CD14-positive monocyte (primary cell): ENCODE measurements at regions of chr16 and their contacts with region 1.

Region 1: GRCh38 chr16:21554795-21555585 is 44.4 kb upstream of the METTL9 start:
- DNase-seq: peak; percentile 84 to 92 (median 85)
- H3K4me3 ChIP-seq: peak overlapping the region in 1 of 3 experiments; percentile 48
- H3K4me3 Mint-ChIP-seq: peak overlapping the region; percentile 69 to 88
- H3K27ac ChIP-seq: no peak overlapping the region
- H3K27ac Mint-ChIP-seq: peak overlapping the region in 2 of 7 donors; percentile 19 to 69
- H3K4me1 ChIP-seq: peaks cover 7 to 10% of the 10 kb centered on the region in 2 donors
- H3K4me1 Mint-ChIP-seq: peaks cover 7% of the 10 kb centered on the region
- H3K27me3 ChIP-seq: no peaks in the 10 kb centered on the region
- H3K27me3 Mint-ChIP-seq: peaks cover 3 to 4% (median 3%) of the 10 kb centered on the region in 3 donors
- CTCF ChIP-seq: peak; percentile 100

Region 2: DNA sequence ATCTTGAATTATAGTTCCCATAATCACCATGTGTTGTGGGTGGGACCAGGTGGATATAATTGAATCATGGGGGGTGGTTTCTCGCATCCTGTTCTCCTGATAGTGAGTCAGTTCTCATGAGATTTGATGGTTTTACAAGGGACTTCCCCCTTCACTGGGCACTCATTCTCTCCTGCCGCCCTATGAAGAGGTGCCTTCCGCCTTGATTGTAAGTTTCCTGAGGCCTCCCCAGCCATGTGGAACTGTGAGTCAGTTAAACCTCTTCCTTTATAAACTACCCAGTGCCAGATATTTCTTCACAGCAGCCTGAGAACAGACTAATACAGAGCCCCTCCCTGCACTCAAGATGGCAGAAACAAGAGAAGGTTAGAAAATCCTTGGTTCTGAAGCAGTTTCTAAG is 370.2 kb before region 1 on chr16:
- intact Hi-C with region 1: loop called (anchors 5 to 10 kb)
- DNase-seq: peak in 1 of 3 donors; percentile 46
- H3K4me3 ChIP-seq: no peak overlapping the region
- H3K4me3 Mint-ChIP-seq: no peak overlapping the region
- H3K27ac ChIP-seq: no peak overlapping the region
- H3K27ac Mint-ChIP-seq: peak overlapping the region in 2 of 7 donors; percentile 70 to 84
- H3K4me1 ChIP-seq: peaks cover 4 to 5% of the 10 kb centered on the region in 2 donors
- H3K4me1 Mint-ChIP-seq: peaks cover 6% of the 10 kb centered on the region
- H3K27me3 ChIP-seq: peaks cover 0 to 2% of the 10 kb centered on the region in 2 donors
- H3K27me3 Mint-ChIP-seq: peaks cover 2 to 8% (median 5%) of the 10 kb centered on the region in 3 donors
- CTCF ChIP-seq: no peak

Region 3: DNA sequence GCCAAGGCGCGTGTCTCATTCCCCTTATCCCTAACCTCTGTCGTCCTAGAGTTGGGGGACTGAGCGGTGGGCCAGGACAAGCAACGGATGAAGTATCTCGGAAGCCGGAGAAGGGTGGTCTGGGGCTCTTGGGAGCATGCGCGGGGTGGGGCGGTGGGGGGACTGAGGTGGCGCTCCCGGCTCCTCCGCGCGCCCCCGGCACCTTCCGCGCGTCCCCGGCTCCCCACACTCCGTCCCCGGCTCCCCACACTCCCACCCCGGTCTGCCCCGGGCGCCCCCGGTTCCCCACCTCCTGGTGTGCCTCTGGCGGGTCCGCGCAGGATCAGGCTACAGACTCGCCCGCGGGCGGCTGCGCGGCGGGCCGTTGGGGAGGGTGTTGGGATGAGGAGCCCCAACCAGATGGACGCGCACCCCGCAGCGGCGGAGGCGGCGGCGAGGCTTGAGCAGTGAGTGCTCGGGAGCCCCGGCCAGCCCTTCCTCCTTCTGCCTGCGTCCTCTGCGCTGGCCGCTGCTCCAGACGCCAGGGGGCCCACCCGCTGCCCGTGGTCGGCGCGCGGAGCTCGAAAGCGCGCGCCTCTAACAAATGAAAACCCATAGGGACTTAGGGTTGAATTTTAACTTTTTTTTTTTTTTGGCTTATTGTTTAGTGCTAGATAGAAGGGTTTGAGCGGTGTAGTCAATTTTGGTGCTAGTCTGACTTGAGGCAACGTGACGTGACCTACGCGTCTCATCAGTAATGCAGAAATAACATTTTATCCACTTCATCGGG is 271.3 kb before region 1 on chr16:
- intact Hi-C with region 1: loop called in 1 of 2 experiments (anchors 10 kb)
- DNase-seq: peak; percentile 31 to 51 (median 46)
- H3K4me3 ChIP-seq: peak overlapping the region in 1 of 3 experiments; percentile 54
- H3K4me3 Mint-ChIP-seq: peak overlapping the region; percentile 66 to 87
- H3K27ac ChIP-seq: no peak overlapping the region
- H3K27ac Mint-ChIP-seq: no peak overlapping the region
- H3K4me1 ChIP-seq: peaks cover 6 to 8% of the 10 kb centered on the region in 2 donors
- H3K4me1 Mint-ChIP-seq: peaks cover 7% of the 10 kb centered on the region
- H3K27me3 ChIP-seq: peaks cover 54 to 76% of the 10 kb centered on the region in 2 donors
- H3K27me3 Mint-ChIP-seq: peaks cover 56 to 74% (median 71%) of the 10 kb centered on the region in 3 donors
- CTCF ChIP-seq: peak; percentile 46

Region 4: DNA sequence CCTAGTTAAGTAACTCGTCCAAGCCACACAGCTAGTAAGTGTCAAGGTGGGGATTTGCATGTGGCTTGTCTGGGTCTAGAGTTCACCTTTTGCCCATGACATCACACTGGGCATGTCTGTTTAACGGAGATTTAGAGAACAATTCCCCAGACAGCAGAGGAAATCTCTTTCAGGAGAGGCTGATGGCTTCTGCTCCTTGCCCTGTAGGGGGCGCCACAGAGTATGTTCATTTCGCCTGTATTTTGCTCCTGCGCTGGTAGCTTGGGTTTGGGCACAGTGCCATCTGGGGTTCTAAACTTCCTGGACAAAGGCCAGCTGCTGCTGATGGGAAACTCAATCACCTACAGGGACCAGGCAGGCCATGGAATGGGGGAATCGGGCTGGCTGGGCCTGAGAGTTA is 129.2 kb after region 1 on chr16:
- intact Hi-C with region 1: no loop called
- DNase-seq: peak in 2 of 3 donors; percentile 24 to 40
- H3K4me3 ChIP-seq: no peak overlapping the region
- H3K4me3 Mint-ChIP-seq: no peak overlapping the region
- H3K27ac ChIP-seq: no peak overlapping the region
- H3K27ac Mint-ChIP-seq: no peak overlapping the region
- H3K4me1 ChIP-seq: no peaks in the 10 kb centered on the region
- H3K4me1 Mint-ChIP-seq: peaks cover 4% of the 10 kb centered on the region
- H3K27me3 ChIP-seq: no peaks in the 10 kb centered on the region
- H3K27me3 Mint-ChIP-seq: peaks cover 3 to 15% (median 8%) of the 10 kb centered on the region in 3 donors
- CTCF ChIP-seq: peak; percentile 71

Region 5: DNA sequence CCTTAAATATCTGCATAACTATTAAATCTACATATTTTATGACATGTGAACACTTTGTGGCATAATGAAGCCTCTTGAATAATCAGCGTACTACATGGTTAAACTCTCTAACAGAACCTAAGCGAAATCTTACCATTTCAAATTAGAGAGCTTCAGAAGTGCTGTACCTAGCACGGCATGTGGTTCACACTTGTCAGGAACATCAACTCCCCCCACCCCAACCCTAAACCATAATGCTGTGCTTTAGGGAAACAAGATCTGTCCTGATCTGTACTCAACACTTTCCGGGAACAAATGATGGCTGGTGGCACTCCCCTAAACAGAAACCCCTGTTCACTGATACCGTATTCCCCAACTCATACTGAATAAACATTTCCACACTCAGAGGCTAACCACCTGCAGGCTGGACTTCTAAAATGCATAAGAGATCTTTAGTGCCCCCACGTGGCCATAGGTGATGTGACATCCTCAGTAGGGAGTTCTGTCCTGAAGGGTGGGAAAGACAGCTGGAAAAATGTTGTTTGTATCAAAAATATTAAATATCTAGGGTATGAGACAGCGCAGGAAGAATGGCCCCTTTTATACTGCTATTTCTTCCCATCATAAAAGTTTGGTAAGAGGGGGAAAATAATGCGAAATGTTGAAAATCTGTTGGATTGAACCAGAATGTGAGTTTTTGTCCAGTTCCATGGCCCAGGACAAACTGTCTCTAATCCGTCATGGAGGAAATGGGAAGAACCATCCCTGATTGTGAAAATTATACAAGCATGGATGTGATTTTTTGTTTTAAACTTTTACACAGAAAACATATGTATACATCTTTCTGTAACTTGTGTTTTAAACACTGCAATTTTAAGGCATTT is 1505.7 kb after region 1 on chr16:
- intact Hi-C with region 1: loop called in 1 of 2 experiments (anchors 10 kb)
- DNase-seq: peak; percentile 25 to 49 (median 47)
- H3K4me3 ChIP-seq: no peak overlapping the region
- H3K4me3 Mint-ChIP-seq: no peak overlapping the region
- H3K27ac ChIP-seq: no peak overlapping the region
- H3K27ac Mint-ChIP-seq: no peak overlapping the region
- H3K4me1 ChIP-seq: peaks cover 0 to 13% of the 10 kb centered on the region in 2 donors
- H3K4me1 Mint-ChIP-seq: peaks cover 36% of the 10 kb centered on the region
- H3K27me3 ChIP-seq: no peaks in the 10 kb centered on the region
- H3K27me3 Mint-ChIP-seq: peaks cover 5 to 9% (median 6%) of the 10 kb centered on the region in 3 donors
- CTCF ChIP-seq: peak; percentile 91